ENCODE measurements at regions of chr1 and their contacts with region 1.

Region 1: GRCh38 chr1:12619792-12620487 is 1.9 kb upstream of the DHRS3 start:
- DNase-seq: peak; percentile 92

Region 2: GRCh38 chr1:12272770-12273169 is 347.2 kb before region 1 on chr1:
- intact Hi-C with region 1: loop called (anchors 5 kb)
- DNase-seq: no peak

Region 3: GRCh38 chr1:12339396-12339795 is 280.5 kb before region 1 on chr1:
- intact Hi-C with region 1: loop called (anchors 5 kb)
- DNase-seq: no peak

Region 4: GRCh38 chr1:12424087-12424529 is 195.8 kb before region 1 on chr1:
- intact Hi-C with region 1: loop called (anchors 5 kb)
- DNase-seq: no peak

Region 5: DNA sequence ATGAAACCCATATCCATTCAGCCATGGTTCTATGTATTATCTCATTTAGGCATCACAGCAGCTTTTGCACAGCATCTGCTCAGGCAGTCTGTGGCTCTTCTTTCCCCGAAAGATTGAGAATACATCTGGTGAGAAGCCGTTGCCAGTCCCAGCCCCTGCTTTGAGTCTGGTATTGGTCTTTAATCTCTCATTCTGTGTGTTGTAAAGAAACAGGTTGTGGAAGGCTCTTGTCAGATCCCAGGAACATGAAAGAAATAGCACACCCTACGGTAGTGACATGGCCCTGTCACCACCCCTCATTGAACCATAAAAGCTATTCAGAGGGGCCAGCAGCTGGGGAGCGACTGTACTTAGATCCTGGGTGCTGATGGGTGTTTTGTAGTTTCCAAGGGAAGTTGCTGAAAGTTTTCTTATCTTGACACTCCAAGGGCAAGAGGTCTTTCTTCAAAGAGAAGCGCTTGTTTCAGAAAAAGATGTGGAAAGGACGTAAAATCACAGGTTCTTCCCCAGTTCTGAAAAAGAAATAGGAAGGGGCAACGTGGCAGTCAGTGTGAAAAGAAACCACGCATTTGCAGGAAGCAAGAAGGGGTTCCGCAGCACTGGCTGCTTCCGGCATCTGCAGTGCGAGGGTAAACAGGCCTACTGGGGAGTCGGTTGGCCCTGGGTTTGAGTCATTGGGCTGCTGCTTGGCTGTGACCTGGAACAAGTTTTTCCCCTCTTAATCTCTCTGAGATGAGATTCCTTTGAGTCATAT is 147.0 kb before region 1 on chr1:
- intact Hi-C with region 1: loop called (anchors 1 kb)
- DNase-seq: no peak

Region 6: DNA sequence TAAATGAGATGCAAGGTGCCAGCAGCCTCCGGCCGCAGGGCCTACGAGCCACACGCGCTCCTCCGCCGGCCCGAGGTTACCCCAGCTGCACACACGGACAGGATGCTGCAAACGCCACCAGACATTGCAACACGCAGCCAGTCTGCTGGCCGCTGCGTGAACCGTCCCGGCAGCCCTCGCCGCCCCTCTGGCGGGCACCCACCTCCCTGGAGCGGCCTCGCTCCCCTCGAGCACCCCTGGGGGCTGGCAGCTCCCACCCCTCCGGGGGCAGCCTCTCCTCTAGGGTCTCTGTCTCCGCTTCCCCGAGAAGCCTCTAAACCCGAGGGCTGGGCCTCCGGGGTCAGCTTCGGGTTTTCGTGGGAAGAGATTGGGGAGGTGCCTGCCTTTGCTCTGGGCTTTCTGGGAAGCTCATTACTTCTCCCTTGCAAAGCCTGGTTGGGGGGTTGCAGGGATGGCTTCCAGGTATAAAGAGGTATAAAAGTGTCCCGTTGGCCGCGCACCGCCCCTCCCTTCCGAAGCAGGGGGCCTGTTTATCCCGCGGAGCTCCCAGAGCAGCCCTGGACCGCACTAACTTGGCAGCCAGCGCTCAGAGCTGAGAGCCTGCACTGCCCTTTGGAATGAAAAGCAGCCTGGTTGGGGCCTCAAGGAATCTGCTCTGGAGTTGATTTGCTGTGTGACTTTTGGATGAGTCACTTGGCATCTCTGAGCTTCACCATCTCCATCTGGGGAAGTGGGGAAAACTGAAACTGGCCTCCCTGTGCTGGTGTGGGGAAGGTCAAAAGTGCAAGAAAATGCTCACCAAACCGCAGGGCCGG is 23.7 kb before region 1 on chr1:
- intact Hi-C with region 1: loop called (anchors 1 kb)
- DNase-seq: peak; percentile 92

Measured in cardiac septum (tissue), 1 donor.